ENCODE measurements at regions of chr3 and their contacts with region 1.

Region 1: GRCh38 chr3:104952146-104952972 is 414.4 kb upstream of the ALCAM start:
- DNase-seq: peak; percentile 94
- ATAC-seq: peak; percentile 100
- H3K4me3 ChIP-seq: no peak overlapping the region
- H3K27ac ChIP-seq: peak overlapping the region; percentile 92
- H3K4me1 ChIP-seq: peaks cover 21% of the 10 kb centered on the region
- H3K27me3 ChIP-seq: no peaks in the 10 kb centered on the region
- CTCF ChIP-seq: no peak

Region 2: GRCh38 chr3:104907507-104907906 is 44.9 kb before region 1 on chr3:
- CTCF ChIA-PET with region 1: no interaction called
- POLR2A ChIA-PET with region 1: no interaction called
- intact Hi-C with region 1: no loop called
- DNase-seq: peak; percentile 88
- ATAC-seq: peak; percentile 53
- H3K4me3 ChIP-seq: no peak overlapping the region; the same call in 1 of the 2 replicates
- H3K27ac ChIP-seq: peak overlapping the region; percentile 45
- H3K4me1 ChIP-seq: peaks cover 30% of the 10 kb centered on the region
- H3K27me3 ChIP-seq: no peaks in the 10 kb centered on the region
- CTCF ChIP-seq: no peak

Region 3: GRCh38 chr3:105077060-105077822 is 124.9 kb after region 1 on chr3:
- CTCF ChIA-PET with region 1: no interaction called
- POLR2A ChIA-PET with region 1: no interaction called
- intact Hi-C with region 1: no loop called
- DNase-seq: no peak
- ATAC-seq: no peak
- H3K4me3 ChIP-seq: no peak overlapping the region
- H3K27ac ChIP-seq: no peak overlapping the region
- H3K4me1 ChIP-seq: no peaks in the 10 kb centered on the region
- H3K27me3 ChIP-seq: no peaks in the 10 kb centered on the region
- CTCF ChIP-seq: no peak

Region 4: DNA sequence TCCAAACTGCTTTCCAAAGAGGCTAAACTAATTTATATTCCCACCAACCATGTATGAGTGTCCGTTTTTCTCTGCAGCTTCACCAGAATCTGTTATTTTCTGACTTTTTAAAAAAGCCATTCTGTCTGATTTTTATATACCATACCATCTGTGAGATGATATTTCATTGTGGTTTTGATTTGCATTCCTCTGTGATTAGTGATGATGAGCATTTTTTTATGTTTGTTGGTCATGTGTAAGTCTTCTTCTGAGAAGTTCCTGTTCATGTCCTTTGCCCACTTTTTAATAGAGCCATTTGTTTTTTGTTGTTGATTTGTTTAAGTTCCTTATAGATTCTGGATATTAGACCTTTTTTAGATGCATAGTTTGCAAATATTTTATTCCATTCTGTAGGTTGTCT is 235.0 kb after region 1 on chr3:
- CTCF ChIA-PET with region 1: no interaction called
- POLR2A ChIA-PET with region 1: no interaction called
- intact Hi-C with region 1: loop called (anchors 10 kb)
- DNase-seq: peak; percentile 67
- ATAC-seq: peak; percentile 79
- H3K4me3 ChIP-seq: no peak overlapping the region
- H3K27ac ChIP-seq: no peak overlapping the region
- H3K4me1 ChIP-seq: no peaks in the 10 kb centered on the region
- H3K27me3 ChIP-seq: no peaks in the 10 kb centered on the region
- CTCF ChIP-seq: no peak

Region 5: DNA sequence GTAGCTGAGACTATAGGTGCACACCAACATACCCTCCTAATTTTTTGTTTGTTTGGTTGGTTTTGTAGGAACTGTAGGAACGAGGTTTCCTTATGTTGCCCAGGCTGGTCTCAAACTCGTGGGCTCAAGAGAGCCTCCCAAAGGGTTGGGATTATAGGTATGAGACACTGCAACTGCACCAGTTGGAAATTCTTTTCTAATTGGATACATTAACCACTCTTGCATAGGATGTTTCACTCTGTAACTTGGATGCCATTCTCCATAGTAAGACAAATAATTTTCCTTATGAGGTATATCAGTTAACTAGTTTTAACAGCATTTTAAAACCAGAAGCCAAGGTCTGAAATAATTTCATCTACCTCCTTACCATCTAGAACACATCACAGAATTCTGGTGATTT is 407.6 kb after region 1 on chr3:
- CTCF ChIA-PET with region 1: no interaction called
- POLR2A ChIA-PET with region 1: no interaction called
- intact Hi-C with region 1: loop called (anchors 1 kb)
- DNase-seq: peak; percentile 25
- ATAC-seq: peak; percentile 25
- H3K4me3 ChIP-seq: no peak overlapping the region
- H3K27ac ChIP-seq: peak overlapping the region; percentile 74
- H3K4me1 ChIP-seq: peaks cover 79% of the 10 kb centered on the region
- H3K27me3 ChIP-seq: no peaks in the 10 kb centered on the region
- CTCF ChIP-seq: no peak

Measured in PC-3 (cell line).